GM12878 (cell line): ENCODE measurements at regions of chr12 and their contacts with region 1.

Region 1: GRCh38 chr12:76402259-76402658 is 54.0 kb upstream of the BBS10 start:
- DNase-seq: no peak
- ATAC-seq: no peak
- H3K4me3 ChIP-seq: no peak overlapping the region
- H3K27ac ChIP-seq: no peak overlapping the region
- H3K4me1 ChIP-seq: no peaks in the 10 kb centered on the region
- H3K27me3 ChIP-seq: no peaks in the 10 kb centered on the region
- CTCF ChIP-seq: no peak
- EP300 ChIP-seq: no peak
- POLR2A ChIP-seq: no peak
- RAD21 ChIP-seq: no peak

Region 2: GRCh38 chr12:76366163-76366562 is 36.1 kb before region 1 on chr12:
- CTCF ChIA-PET with region 1: no interaction called
- POLR2A ChIA-PET with region 1: interaction called, 3 read pairs
- RAD21 ChIA-PET with region 1: no interaction called
- SMC1A ChIA-PET with region 1: no interaction called
- in situ Hi-C with region 1: no loop called
- intact Hi-C with region 1: loop called (anchors 5 kb)
- DNase-seq: no peak
- ATAC-seq: no peak
- H3K4me3 ChIP-seq: no peak overlapping the region
- H3K27ac ChIP-seq: no peak overlapping the region
- H3K4me1 ChIP-seq: no peaks in the 10 kb centered on the region
- H3K27me3 ChIP-seq: no peaks in the 10 kb centered on the region
- CTCF ChIP-seq: no peak
- EP300 ChIP-seq: no peak
- POLR2A ChIP-seq: no peak
- RAD21 ChIP-seq: no peak